Calu3 (cell line): ENCODE measurements at regions of chr12 and their contacts with region 1.

Region 1: DNA sequence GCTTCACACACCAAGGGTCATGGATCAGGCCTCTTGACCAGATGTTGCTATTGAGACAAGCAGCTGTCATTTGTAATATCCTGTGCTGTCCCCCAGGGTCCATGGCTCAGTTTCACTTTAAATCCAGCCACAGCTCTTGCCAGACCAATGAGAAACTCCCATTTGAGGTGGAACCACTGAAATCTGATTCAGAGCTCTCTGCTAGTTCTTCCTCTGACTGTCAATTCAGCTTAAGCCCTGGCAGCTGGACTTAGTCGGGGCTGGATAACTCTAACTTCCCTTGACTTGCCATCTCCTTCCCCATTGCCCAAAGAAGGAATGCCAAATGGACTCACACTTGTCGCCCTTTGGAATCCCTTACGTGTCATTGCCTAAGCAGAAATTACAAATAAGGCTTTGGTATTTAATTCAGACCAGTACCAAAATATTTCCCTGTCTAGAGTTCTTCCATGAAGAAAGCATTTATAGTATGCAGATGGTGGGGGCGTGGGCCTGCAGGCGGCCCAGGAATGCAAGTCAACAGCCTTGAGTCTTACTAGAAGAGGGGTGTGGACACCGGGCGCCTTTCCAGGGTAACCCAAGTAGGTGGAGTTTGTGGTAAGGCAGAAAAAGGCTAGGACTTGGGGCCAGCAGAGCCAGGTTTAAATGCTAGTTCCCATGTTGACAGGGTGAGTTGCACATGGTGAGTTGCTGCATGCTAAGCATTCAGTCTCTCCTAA is 96.9 kb upstream of the TMPO start:
- DNase-seq: peak; percentile 95
- H3K4me3 Mint-ChIP-seq: peak overlapping the region; percentile 55
- H3K27ac Mint-ChIP-seq: peak overlapping the region; percentile 88
- H3K4me1 Mint-ChIP-seq: peaks cover 35% of the 10 kb centered on the region
- H3K27me3 Mint-ChIP-seq: no peaks in the 10 kb centered on the region
- CTCF ChIP-seq: no peak

Region 2: GRCh38 chr12:98259693-98260092 is 158.8 kb before region 1 on chr12:
- CTCF ChIA-PET with region 1: no interaction called
- intact Hi-C with region 1: no loop called
- DNase-seq: no peak
- H3K4me3 Mint-ChIP-seq: no peak overlapping the region
- H3K27ac Mint-ChIP-seq: no peak overlapping the region
- H3K4me1 Mint-ChIP-seq: no peaks in the 10 kb centered on the region
- H3K27me3 Mint-ChIP-seq: peaks cover 89% of the 10 kb centered on the region
- CTCF ChIP-seq: no peak

Region 3: GRCh38 chr12:98296462-98297079 is 121.9 kb before region 1 on chr12:
- CTCF ChIA-PET with region 1: no interaction called
- intact Hi-C with region 1: no loop called
- DNase-seq: peak; percentile 12
- H3K4me3 Mint-ChIP-seq: no peak overlapping the region
- H3K27ac Mint-ChIP-seq: no peak overlapping the region
- H3K4me1 Mint-ChIP-seq: no peaks in the 10 kb centered on the region
- H3K27me3 Mint-ChIP-seq: peaks cover 74% of the 10 kb centered on the region
- CTCF ChIP-seq: no peak

Region 4: GRCh38 chr12:98503592-98504367 is 85.3 kb after region 1 on chr12:
- CTCF ChIA-PET with region 1: no interaction called
- intact Hi-C with region 1: loop called (anchors 5 kb)
- DNase-seq: peak; percentile 96
- H3K4me3 Mint-ChIP-seq: peak overlapping the region; percentile 70
- H3K27ac Mint-ChIP-seq: peak overlapping the region; percentile 100
- H3K4me1 Mint-ChIP-seq: peaks cover 43% of the 10 kb centered on the region
- H3K27me3 Mint-ChIP-seq: peaks cover 15% of the 10 kb centered on the region
- CTCF ChIP-seq: no peak

Region 5: GRCh38 chr12:98532681-98533304 is 114.3 kb after region 1 on chr12:
- CTCF ChIA-PET with region 1: interaction called, 17 read pairs
- intact Hi-C with region 1: no loop called
- DNase-seq: peak; percentile 66
- H3K4me3 Mint-ChIP-seq: no peak overlapping the region
- H3K27ac Mint-ChIP-seq: no peak overlapping the region
- H3K4me1 Mint-ChIP-seq: peaks cover 5% of the 10 kb centered on the region
- H3K27me3 Mint-ChIP-seq: no peaks in the 10 kb centered on the region
- CTCF ChIP-seq: peak; percentile 63

Region 6: GRCh38 chr12:98653866-98654493 is 235.5 kb after region 1 on chr12:
- CTCF ChIA-PET with region 1: no interaction called
- intact Hi-C with region 1: loop called (anchors 2 kb)
- DNase-seq: peak; percentile 22
- H3K4me3 Mint-ChIP-seq: no peak overlapping the region
- H3K27ac Mint-ChIP-seq: no peak overlapping the region
- H3K4me1 Mint-ChIP-seq: peaks cover 14% of the 10 kb centered on the region
- H3K27me3 Mint-ChIP-seq: no peaks in the 10 kb centered on the region
- CTCF ChIP-seq: peak; percentile 28

Region 7: GRCh38 chr12:98743347-98743953 is 324.9 kb after region 1 on chr12:
- CTCF ChIA-PET with region 1: no interaction called
- intact Hi-C with region 1: loop called (anchors 5 kb)
- DNase-seq: peak; percentile 64
- H3K4me3 Mint-ChIP-seq: no peak overlapping the region
- H3K27ac Mint-ChIP-seq: no peak overlapping the region
- H3K4me1 Mint-ChIP-seq: no peaks in the 10 kb centered on the region
- H3K27me3 Mint-ChIP-seq: peaks cover 63% of the 10 kb centered on the region
- CTCF ChIP-seq: peak; percentile 48